Endothelial cell of umbilical vein (primary cell): ENCODE measurements at regions of chr1 and their contacts with region 1.

Region 1: DNA sequence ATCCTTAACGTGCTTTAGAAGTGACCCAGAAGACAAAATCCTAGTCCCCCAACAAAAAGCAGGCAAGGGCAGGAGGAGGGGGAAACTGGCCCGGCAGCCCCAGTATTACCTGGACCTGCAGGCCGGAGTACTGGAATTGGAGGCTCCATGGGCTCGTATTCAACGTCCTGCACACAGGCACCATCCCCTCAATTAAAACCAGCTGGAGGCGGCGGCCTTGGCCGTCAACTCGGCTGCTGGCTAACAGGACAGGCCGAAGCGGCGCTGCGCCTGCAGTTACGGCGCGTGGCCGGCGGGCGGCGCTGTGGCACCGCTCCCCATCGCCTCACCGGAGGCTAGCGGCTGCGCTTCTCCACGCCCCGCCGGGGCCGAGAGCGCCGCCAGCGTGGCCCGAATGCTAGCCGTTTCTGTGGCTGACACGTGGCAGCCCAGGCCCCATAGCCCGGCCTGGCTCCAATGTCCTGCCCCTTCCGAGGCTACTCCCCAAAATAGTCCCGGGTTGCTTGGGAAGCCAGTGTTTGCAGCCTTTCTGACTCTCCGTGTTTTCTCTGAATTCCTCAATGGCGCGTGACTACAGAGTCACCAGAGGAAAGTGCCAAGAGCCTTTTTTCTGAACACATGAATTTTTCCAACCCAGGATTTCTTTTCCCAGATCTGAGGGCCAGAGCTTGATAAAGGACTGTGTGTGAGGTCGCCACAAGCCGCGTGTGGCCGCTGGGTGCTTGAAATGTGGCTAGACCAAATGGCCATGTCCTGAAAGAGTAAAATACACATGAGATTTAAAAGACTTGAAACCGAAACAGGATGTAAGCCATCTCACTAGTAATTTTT is 82.5 kb downstream of the HHIPL2 start:
- DNase-seq: peak; percentile 97
- H3K4me3 ChIP-seq: peak overlapping the region; percentile 49 to 71 (median 53)
- H3K27ac ChIP-seq: peak overlapping the region; percentile 83
- H3K4me1 ChIP-seq: peaks cover 2% of the 10 kb centered on the region
- H3K27me3 ChIP-seq: peaks cover 6 to 7% of the 10 kb centered on the region in 2 experiments
- CTCF ChIP-seq: peak; percentile 95 to 100
- POLR2A ChIP-seq: peak; percentile 80

Region 2: GRCh38 chr1:221937155-221937953 is 528.1 kb before region 1 on chr1:
- CTCF ChIA-PET with region 1: no interaction called
- POLR2A ChIA-PET with region 1: no interaction called
- dilution Hi-C with region 1: no loop called
- intact Hi-C with region 1: no loop called
- DNase-seq: no peak
- H3K4me3 ChIP-seq: no peak overlapping the region
- H3K27ac ChIP-seq: no peak overlapping the region
- H3K4me1 ChIP-seq: no peaks in the 10 kb centered on the region
- H3K27me3 ChIP-seq: no peaks in the 10 kb centered on the region
- CTCF ChIP-seq: no peak
- POLR2A ChIP-seq: no peak

Region 3: GRCh38 chr1:222441066-222441465 is 24.4 kb before region 1 on chr1:
- CTCF ChIA-PET with region 1: no interaction called
- POLR2A ChIA-PET with region 1: no interaction called
- dilution Hi-C with region 1: no loop called
- intact Hi-C with region 1: no loop called
- DNase-seq: no peak
- H3K4me3 ChIP-seq: no peak overlapping the region
- H3K27ac ChIP-seq: no peak overlapping the region
- H3K4me1 ChIP-seq: no peaks in the 10 kb centered on the region
- H3K27me3 ChIP-seq: no peaks in the 10 kb centered on the region
- CTCF ChIP-seq: no peak
- POLR2A ChIP-seq: no peak

Region 4: DNA sequence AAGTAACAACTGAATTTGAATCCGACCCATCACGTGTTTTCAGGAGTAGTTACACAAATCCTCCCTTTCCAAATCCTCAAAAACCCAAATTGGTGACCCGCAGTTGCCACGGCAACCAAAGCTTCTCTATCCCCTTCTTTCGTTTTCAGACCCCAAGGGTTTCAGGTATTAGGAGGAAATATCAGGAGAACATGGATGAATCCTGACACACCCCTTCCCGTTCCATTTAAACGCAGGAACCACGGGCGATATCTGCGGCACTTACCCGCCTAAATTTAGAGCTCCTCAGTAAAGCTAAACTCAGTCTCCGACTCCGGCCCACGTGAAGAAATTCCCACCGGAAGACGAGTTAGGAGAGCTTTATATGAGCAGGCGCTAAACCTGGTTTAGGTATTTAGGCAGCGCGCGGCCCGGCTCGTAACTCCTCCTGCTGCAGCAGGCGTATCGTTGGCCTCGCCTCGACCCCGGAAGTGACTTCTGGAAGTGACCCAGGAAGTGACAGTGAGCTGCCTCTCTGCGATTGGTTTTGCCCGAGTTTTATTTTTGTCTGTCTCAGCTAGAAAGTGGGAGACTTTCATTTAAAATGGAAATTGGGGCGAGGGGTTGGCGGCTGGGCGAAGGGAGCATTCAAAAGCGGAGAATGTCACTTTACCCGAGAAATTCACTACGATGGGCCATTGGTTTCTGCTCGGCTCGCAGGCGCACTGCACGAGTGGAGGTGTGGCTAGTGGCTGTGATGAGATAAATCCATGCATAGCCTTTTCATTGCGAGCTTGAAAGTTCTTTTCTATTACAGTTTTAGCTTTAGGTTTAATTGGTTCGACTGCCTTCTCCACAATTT is 124.3 kb after region 1 on chr1 and contains the start of gene TAF1A:
- CTCF ChIA-PET with region 1: interaction called, 7 read pairs
- POLR2A ChIA-PET with region 1: no interaction called
- dilution Hi-C with region 1: no loop called
- intact Hi-C with region 1: loop called (anchors 1 kb)
- DNase-seq: peak; percentile 60
- H3K4me3 ChIP-seq: peak within 1 kb of the TSS; percentile 49 to 89 (median 72)
- H3K27ac ChIP-seq: peak within 1 kb of the TSS; percentile 45
- H3K4me1 ChIP-seq: peaks cover 11% of the 10 kb centered on the region
- H3K27me3 ChIP-seq: no peaks in the 10 kb centered on the region
- CTCF ChIP-seq: no peak
- POLR2A ChIP-seq: peak; percentile 37
- total RNA-seq, gene TAF1A: 5.3 and 7.1 TPM in 2 replicates

Region 5: DNA sequence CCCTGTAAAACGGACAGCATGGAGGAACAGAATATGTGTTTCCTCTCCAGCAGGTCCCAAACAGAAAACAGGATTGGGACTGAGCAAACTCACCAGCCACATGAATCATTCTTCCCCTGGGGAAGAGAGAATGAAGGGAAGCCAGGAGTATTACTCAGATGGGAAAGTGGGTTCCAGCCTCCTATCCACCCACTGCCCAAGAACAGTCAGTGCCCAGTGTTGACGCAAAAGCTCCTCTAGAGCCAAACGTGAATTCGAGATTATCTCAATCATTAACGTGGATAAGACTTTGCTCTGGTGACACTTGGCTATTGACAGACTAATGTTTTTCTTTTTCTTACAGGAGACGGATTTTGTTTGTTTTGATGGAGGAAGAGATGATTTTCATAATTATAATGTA is 161.8 kb after region 1 on chr1:
- CTCF ChIA-PET with region 1: interaction called, 154 read pairs
- POLR2A ChIA-PET with region 1: no interaction called
- dilution Hi-C with region 1: no loop called
- intact Hi-C with region 1: no loop called
- DNase-seq: peak; percentile 37
- H3K4me3 ChIP-seq: no peak overlapping the region
- H3K27ac ChIP-seq: no peak overlapping the region
- H3K4me1 ChIP-seq: peaks cover 4% of the 10 kb centered on the region
- H3K27me3 ChIP-seq: no peaks in the 10 kb centered on the region
- CTCF ChIP-seq: no peak
- POLR2A ChIP-seq: no peak

Region 6: DNA sequence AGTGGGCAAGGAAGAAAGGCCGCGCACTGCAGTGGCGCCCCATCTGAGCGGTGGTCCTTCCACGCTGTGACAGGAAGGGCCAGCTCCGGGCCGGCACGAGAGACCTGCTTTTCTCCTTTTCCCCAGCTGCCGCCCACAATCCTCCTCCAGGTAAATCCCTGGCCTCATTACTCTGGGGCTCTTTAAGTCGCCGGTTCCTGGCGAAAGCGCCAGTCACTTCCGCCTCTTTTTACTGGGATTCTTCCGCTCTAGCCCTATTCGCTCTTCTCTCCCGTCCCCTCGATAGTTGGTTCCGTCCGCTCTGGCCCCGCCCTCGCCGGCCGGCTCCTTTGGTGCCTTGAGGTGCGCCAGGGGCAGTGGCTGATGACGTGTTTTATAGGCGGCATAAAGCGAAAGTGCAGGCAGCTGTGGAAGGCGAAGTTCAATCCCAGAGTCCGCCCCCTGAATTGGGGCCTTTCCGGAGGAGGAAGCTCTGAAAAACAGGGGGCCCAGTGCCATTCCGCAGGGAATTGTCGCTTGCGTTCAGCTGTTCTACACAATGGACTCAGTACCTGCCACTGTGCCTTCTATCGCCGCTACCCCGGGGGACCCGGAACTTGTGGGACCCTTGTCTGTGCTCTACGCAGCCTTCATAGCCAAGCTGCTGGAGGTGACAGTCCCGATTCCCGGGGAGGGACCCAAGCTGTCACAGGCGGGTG is 178.7 kb after region 1 on chr1:
- CTCF ChIA-PET with region 1: interaction called, 11 read pairs
- POLR2A ChIA-PET with region 1: interaction called, 3 read pairs
- dilution Hi-C with region 1: no loop called
- intact Hi-C with region 1: loop called (anchors 1 kb)
- DNase-seq: peak; percentile 99
- H3K4me3 ChIP-seq: peak overlapping the region; percentile 42 to 98 (median 72)
- H3K27ac ChIP-seq: peak overlapping the region; percentile 93
- H3K4me1 ChIP-seq: peaks cover 13% of the 10 kb centered on the region
- H3K27me3 ChIP-seq: no peaks in the 10 kb centered on the region
- CTCF ChIP-seq: no peak
- POLR2A ChIP-seq: peak; percentile 78

Region 7: DNA sequence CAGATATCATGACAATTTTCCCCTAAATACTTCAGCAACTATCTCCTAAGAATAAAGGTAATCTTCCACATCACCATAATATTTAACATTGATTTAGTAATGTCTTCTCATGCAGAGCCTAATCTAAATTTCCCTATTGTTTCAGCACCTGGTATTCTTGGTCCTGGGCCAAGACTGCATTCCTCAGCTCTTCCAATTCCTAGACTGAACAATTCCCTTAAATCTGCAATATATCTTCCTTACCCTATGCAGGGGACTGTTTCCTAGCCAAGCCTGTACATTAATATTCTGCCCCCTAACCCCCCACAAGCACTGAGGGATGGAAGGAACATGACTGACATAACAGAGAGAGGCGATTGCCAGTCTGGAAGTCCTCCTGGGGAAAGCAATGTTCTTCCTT is 320.7 kb after region 1 on chr1:
- CTCF ChIA-PET with region 1: no interaction called
- POLR2A ChIA-PET with region 1: no interaction called
- dilution Hi-C with region 1: no loop called
- intact Hi-C with region 1: loop called (anchors 5 kb)
- DNase-seq: peak; percentile 79
- H3K4me3 ChIP-seq: no peak overlapping the region
- H3K27ac ChIP-seq: no peak overlapping the region
- H3K4me1 ChIP-seq: peaks cover 26% of the 10 kb centered on the region
- H3K27me3 ChIP-seq: peaks cover 0 to 3% of the 10 kb centered on the region in 2 experiments
- CTCF ChIP-seq: no peak
- POLR2A ChIP-seq: no peak